ENCODE measurements at regions of chr5 and their contacts with region 1.

Region 1: DNA sequence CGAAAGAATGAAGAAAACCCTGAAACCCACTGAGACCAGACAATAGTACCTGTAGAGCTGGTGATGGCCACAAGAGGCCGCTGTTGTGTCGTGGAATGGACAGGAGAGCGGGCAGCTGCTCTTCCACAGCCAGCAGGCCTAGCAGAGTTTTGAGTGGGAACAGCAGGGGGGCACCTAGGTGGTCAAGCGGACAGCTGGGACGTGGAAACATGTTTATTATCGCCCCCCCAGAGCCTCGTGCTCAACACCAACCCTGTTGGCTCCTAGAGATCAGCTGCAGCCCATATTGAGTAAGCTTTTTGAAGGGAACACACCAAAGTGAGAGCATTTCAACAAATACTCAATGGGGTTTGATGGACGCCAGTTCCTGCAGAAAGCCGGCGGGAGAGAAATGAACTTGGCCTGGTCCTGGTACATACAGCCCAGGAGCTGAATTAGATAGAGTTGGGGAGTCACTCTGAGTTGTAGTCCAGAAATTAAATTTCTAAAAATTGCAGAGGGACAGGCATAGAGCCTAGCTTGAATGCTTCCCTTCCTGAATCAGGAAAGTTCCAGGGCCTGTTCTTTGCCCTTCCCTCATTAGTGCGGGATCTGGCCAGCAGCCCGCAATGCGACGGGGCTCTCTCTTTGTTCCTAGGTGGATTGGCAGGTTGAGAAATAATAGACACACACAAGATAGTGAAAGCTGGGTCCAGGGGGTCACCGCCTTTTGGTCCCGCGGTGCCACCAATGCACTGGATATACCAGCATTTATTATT is 33.8 kb downstream of the MFAP3 start:
- DNase-seq: peak; percentile 91
- ATAC-seq: peak; percentile 91
- H3K4me3 Mint-ChIP-seq: peak overlapping the region; percentile 35
- H3K27ac Mint-ChIP-seq: peak overlapping the region; percentile 63
- H3K4me1 Mint-ChIP-seq: peaks cover 18% of the 10 kb centered on the region
- H3K27me3 Mint-ChIP-seq: peaks cover 5% of the 10 kb centered on the region
- CTCF ChIP-seq: peak; percentile 86

Region 2: DNA sequence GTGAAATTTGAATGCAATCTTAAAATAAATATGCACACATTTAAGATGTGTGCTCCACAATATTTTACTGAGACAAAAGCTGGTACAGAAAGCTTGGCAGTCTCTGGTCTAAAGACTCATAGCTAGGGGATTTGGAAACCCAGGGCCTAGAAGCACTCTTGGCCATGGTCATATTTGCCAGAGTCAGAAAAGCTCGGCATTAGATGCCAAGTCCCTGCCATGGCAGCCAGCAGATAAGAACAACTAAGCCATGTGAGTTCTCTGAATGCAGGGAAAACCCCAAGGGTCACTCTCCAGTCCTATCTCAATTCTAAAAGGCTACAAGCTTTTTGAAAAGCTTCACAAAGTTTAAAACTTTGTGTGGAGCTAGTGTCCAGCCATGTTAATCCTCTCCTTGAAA is 153.4 kb before region 1 on chr5:
- CTCF ChIA-PET with region 1: no interaction called
- POLR2A ChIA-PET with region 1: no interaction called
- intact Hi-C with region 1: no loop called
- DNase-seq: no peak
- ATAC-seq: no peak
- H3K4me3 Mint-ChIP-seq: no peak overlapping the region
- H3K27ac Mint-ChIP-seq: no peak overlapping the region
- H3K4me1 Mint-ChIP-seq: no peaks in the 10 kb centered on the region
- H3K27me3 Mint-ChIP-seq: peaks cover 4% of the 10 kb centered on the region
- CTCF ChIP-seq: no peak

Region 3: DNA sequence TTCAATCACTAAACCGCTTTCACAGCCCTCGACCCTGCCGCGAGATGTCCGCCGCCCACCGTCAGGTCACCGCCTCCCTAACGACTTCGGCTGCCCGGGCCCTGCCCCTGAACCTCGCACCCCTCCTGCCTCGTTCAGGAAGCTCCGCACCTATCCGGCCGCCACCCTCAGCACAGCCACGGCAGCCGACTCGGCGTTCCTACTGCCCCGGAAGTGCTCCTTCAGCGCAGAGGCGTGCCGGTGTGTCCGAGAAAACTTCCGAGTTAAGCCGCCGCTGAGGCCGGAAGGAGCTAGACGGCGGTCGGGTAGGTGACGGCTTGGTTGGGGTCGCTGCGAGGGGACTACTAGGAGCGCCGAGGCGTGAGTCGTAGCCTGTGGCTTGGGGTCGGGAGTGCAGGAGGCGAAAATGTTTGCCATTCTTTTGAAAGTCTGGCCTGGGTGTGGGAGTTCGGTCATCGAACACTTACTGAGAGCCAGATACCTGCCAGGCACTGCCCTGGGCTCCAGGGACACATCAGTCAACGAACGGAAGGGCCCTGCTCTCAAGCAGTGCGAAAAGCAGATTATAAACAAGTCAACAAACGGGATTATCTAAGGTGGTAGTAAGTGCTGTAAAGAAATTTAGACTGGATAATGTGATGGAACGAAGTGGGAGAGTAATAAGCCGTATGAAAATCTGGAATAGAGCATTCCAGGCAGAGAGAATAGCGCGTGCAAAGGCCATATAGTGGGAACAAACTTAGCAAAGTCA is 33.7 kb before region 1 on chr5 and contains the starts of genes FAM114A2 and MFAP3:
- CTCF ChIA-PET with region 1: interaction called, 15 read pairs
- POLR2A ChIA-PET with region 1: interaction called, 3 read pairs
- intact Hi-C with region 1: no loop called
- DNase-seq: peak; percentile 93
- ATAC-seq: peak; percentile 99
- H3K4me3 Mint-ChIP-seq: peak within 1 kb of the TSS; percentile 98
- H3K27ac Mint-ChIP-seq: peak within 1 kb of the TSS; percentile 97
- H3K4me1 Mint-ChIP-seq: peaks cover 58% of the 10 kb centered on the region
- H3K27me3 Mint-ChIP-seq: no peaks in the 10 kb centered on the region
- CTCF ChIP-seq: no peak
- total RNA-seq, gene FAM114A2: 25.6 to 26.9 TPM
- total RNA-seq, gene MFAP3: 10.0 to 12.1 TPM

Region 4: DNA sequence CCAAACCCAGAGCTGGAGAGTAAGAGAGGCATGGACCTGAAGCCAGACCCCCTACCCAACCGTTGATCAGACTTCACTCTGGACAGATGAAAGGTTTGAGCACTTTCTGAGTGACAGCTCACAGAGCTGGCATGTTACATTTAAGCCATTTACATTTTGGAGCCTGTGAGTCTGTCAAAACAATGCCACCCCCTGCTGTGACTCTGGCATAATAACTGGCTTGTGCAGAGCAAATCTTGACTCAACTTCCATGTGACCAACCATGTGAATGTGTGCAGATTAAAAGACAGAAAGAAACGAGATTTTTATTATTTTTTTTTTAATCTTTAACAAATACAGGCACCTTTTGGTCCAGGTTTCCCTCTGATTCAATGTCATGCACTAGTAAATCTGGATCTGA is 14.7 kb after region 1 on chr5:
- CTCF ChIA-PET with region 1: interaction called, 11 read pairs
- POLR2A ChIA-PET with region 1: no interaction called
- intact Hi-C with region 1: no loop called
- DNase-seq: no peak
- ATAC-seq: no peak
- H3K4me3 Mint-ChIP-seq: no peak overlapping the region
- H3K27ac Mint-ChIP-seq: no peak overlapping the region
- H3K4me1 Mint-ChIP-seq: no peaks in the 10 kb centered on the region
- H3K27me3 Mint-ChIP-seq: peaks cover 7% of the 10 kb centered on the region
- CTCF ChIP-seq: no peak

Region 5: DNA sequence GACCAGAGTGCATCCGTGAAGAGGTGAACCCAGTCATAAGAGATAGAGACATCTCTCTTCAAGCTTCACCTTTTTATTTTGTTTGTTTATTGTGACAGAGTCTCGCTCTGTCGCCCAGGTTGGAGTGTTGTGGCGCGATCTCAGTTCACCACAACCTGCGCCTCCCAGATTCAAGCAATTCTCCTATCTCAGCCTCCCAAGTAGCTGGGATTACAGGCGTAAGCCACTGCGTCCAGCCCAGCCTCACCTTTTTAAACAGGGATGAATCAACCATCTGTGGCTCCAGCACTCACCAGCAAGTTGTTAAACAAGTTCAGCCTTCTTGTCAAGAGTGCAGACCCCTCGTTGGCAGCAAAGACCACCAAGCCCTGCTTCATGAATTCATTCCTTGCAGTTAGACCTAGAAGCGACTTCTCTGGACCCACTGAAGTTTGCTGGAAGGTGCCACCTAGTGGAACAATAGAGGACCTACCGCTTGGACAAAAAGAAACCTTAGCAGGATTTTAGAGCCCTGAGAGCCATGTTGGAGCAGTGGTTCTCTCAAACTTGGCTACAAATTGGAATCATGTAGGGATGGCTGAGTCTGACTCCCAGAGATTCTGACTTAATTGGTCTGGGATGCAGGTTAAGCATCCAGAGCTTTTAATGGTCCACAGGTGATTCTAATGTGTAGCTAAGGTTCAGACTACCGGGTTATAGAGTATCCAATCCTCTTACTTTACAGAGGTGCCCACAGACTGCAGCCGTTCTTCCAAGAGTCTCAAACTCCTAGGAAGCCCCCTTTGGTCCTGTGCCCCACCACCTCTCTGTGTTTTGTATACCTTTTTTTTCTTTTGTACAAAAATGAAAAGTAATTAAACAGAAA is 107.5 kb after region 1 on chr5:
- CTCF ChIA-PET with region 1: interaction called, 161 read pairs
- POLR2A ChIA-PET with region 1: no interaction called
- intact Hi-C with region 1: loop called (anchors 2 kb)
- DNase-seq: peak; percentile 48
- ATAC-seq: peak; percentile 97
- H3K4me3 Mint-ChIP-seq: no peak overlapping the region
- H3K27ac Mint-ChIP-seq: no peak overlapping the region
- H3K4me1 Mint-ChIP-seq: no peaks in the 10 kb centered on the region
- H3K27me3 Mint-ChIP-seq: peaks cover 8% of the 10 kb centered on the region
- CTCF ChIP-seq: peak; percentile 57

Region 6: DNA sequence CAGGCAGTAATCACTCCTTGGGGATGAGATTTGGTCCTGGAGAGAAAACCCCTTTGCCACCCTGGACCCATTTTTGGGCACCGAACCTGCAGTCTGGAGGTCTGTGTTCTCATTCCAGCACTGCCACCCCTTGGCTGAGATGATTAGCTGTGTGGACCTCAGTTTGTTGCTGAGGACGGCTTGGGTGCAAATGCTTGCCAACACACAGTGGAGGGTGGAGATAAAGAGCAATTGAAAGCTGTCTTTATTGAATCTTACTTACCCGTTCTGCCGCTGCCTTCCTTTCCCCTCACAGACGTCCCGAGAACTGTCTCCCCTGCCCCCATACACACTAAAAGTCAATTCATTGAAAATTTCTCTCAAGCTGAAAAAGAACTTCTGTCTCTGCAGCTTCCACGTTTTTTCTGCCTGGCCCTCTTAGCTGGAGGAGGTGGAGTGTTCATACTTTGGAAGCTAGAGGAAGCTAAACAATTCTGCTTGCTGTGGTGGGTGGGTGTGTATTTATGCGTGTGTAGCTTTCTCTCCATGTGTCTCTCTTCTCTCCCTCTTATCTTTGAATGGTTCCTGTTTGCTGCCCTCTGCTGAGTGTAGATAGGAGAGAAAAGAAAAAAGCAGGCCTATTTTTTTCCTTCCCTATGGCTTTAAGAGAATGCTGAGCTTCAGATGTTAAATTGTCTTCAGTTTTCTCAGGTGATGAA is 124.5 kb after region 1 on chr5:
- CTCF ChIA-PET with region 1: interaction called, 161 read pairs
- POLR2A ChIA-PET with region 1: interaction called, 3 read pairs
- intact Hi-C with region 1: no loop called
- DNase-seq: no peak
- ATAC-seq: no peak
- H3K4me3 Mint-ChIP-seq: no peak overlapping the region
- H3K27ac Mint-ChIP-seq: peak overlapping the region; percentile 83
- H3K4me1 Mint-ChIP-seq: peaks cover 60% of the 10 kb centered on the region
- H3K27me3 Mint-ChIP-seq: no peaks in the 10 kb centered on the region
- CTCF ChIP-seq: no peak

Region 7: GRCh38 chr5:154405078-154405792 is 332.6 kb after region 1 on chr5:
- CTCF ChIA-PET with region 1: interaction called, 132 read pairs
- POLR2A ChIA-PET with region 1: interaction called, 4 read pairs
- intact Hi-C with region 1: loop called (anchors 1 kb)
- DNase-seq: peak; percentile 86
- ATAC-seq: peak; percentile 100
- H3K4me3 Mint-ChIP-seq: peak overlapping the region; percentile 53
- H3K27ac Mint-ChIP-seq: no peak overlapping the region
- H3K4me1 Mint-ChIP-seq: peaks cover 7% of the 10 kb centered on the region
- H3K27me3 Mint-ChIP-seq: no peaks in the 10 kb centered on the region
- CTCF ChIP-seq: peak; percentile 89

Measured in activated CD8-positive, alpha-beta T cell treated with anti-CD3 and anti-CD28 coated beads for 36 hours (primary cell).